Dorsolateral prefrontal cortex (tissue), 120 donors: ENCODE measurements at regions of chr14 and their contacts with region 1.

Region 1: GRCh38 chr14:75982266-75983018 is 647 bp upstream of the TGFB3 start:
- DNase-seq: peak; percentile 77 to 89 (median 83)
- H3K4me3 ChIP-seq: peak overlapping the region; percentile 53 to 86 (median 78)
- H3K27ac ChIP-seq: peak overlapping the region; percentile 75 to 99 (median 96)
- H3K27me3 ChIP-seq: no peaks in the 10 kb centered on the region
- CTCF ChIP-seq: peak in 55 of 56 donors; percentile 41 to 86 (median 70)

Region 2: DNA sequence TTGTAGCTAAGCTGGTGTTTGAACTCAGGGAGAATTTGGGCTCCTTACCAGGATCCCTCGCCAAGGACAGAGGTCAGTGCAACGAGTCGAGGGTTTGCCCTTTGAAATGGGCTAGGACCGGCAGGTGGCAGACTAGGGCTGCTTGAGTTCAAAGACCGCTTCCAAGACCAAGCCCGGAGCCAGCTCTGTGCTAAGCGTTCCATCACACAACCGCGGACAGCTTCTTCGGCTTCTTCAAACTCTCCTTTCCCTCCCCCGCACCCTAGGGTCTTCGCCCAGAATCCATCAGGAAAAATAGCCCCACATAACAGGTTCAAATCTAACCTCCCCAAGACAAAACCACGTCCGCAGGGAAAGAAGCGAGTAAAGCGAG is 404.7 kb before region 1 on chr14:
- intact Hi-C with region 1: loop called (anchors 5 to 10 kb)
- DNase-seq: peak; percentile 72 to 88 (median 80)
- H3K4me3 ChIP-seq: peak overlapping the region; percentile 24 to 78 (median 62)
- H3K27ac ChIP-seq: peak overlapping the region in 47 of 59 donors; percentile 1 to 85 (median 71)
- H3K27me3 ChIP-seq: peaks cover 0 to 4% (median 0%) of the 10 kb centered on the region in 45 donors
- CTCF ChIP-seq: peak in 55 of 56 donors; percentile 51 to 90 (median 74)

Region 3: DNA sequence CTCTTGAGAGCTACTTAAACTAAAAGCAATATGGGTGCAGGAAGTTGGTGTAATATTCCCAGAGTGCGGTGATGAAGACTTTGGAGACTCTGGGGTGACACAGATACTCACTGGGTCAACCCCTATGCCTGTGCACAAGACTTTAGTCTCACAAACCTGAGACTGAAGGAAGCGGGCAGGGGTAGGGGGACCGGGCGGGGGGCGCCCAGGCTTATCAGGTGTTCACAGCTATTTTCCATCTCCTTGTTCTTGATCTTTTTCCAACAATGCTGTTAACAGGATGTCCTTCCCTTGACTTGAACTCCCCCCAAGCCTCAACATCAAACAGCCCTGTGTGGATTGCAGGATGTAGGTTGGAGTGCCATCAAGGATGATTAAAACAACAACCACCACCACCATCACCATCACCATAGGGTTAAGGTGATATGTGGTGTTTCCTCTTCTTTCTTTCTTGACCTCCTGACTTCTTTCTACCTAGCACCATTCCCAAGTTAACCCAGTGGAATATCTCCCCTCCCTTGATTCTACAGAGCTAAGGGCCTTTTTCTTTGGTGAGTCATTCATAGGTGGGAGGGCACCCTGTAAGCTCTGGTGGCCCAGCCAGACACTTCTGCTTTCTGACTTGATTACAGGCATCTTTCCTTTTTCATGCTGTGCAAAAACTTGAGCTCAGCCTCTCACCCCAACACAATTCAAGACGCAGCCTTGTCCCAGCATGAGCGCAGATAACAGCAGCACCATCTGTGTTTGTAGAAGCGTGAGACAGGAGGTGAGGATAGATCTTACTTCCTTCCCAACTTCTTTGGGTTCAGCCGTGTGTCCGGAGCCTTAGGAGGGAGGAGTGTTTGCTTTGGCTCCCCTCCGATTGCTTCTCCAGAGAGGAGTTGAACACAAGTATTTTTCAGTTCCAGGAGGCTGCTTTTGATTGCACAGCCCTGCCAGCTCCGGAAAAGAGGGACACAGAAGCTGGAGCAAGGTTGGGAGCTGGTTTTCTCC is 377.3 kb before region 1 on chr14:
- intact Hi-C with region 1: no loop called
- DNase-seq: no peak
- H3K4me3 ChIP-seq: peak overlapping the region in 4 of 59 donors; percentile 6 to 22 (median 20)
- H3K27ac ChIP-seq: peak overlapping the region in 9 of 59 donors; percentile 2 to 46 (median 23)
- H3K27me3 ChIP-seq: peaks cover 0 to 3% (median 0%) of the 10 kb centered on the region in 45 donors
- CTCF ChIP-seq: no peak

Region 4: GRCh38 chr14:75660630-75661494 is 321.6 kb before region 1 on chr14 and contains the starts of genes ERG28 and TTLL5:
- intact Hi-C with region 1: loop called (anchors 1 to 2 kb)
- DNase-seq: peak; percentile 90 to 99 (median 97)
- H3K4me3 ChIP-seq: peak within 1 kb of the TSS; percentile 65 to 100 (median 97)
- H3K27ac ChIP-seq: peak within 1 kb of the TSS; percentile 41 to 95 (median 89)
- H3K27me3 ChIP-seq: no peaks in the 10 kb centered on the region
- CTCF ChIP-seq: peak in 33 of 56 donors; percentile 4 to 56 (median 20)
- total RNA-seq, gene ERG28: 10.2 to 21.8 (median 14.5) TPM
- total RNA-seq, gene TTLL5: 36.5 to 74.0 (median 53.7) TPM

Region 5: GRCh38 chr14:75794615-75795038 is 187.8 kb before region 1 on chr14:
- intact Hi-C with region 1: loop called (anchors 2 to 5 kb)
- DNase-seq: no peak
- H3K4me3 ChIP-seq: no peak overlapping the region
- H3K27ac ChIP-seq: peak overlapping the region in 19 of 59 donors; percentile 5 to 65 (median 39)
- H3K27me3 ChIP-seq: no peaks in the 10 kb centered on the region
- CTCF ChIP-seq: peak in 53 of 56 donors; percentile 12 to 77 (median 50)

Region 6: GRCh38 chr14:75906676-75907280 is 75.7 kb before region 1 on chr14:
- intact Hi-C with region 1: loop called (anchors 1 to 2 kb)
- DNase-seq: peak in 5 of 10 donors; percentile 56 to 84 (median 63)
- H3K4me3 ChIP-seq: peak overlapping the region in 1 of 59 donors; percentile 35
- H3K27ac ChIP-seq: peak overlapping the region in 42 of 59 donors; percentile 1 to 78 (median 44)
- H3K27me3 ChIP-seq: no peaks in the 10 kb centered on the region
- CTCF ChIP-seq: peak; percentile 84 to 99 (median 94)